ENCODE measurements at regions of chr6 and their contacts with region 1.

Region 1: DNA sequence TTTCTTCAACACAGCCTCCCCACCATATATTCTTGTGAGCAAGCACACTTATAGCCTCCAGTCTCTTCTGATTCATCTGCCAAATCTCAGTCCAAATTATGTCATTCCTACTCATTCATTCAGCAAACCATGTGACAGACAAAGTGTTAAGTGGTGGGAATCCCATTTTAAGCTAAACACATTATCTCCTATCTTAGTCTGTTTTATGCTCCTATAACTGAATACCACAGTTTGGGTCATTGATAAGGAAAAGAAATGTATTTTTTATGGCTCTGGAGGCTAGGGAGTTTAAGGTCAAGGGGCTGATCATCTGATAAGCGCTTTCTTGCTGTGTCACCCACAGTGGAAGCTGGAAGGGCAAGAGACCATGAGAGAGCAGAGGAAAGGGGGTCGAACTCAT is 23.9 kb upstream of the SMIM13 start:
- DNase-seq: no peak
- ATAC-seq: no peak
- H3K4me3 ChIP-seq: no peak overlapping the region
- H3K27ac ChIP-seq: no peak overlapping the region
- H3K4me1 ChIP-seq: peaks cover 0 to 28% (median 11%) of the 10 kb centered on the region in 4 donors
- H3K27me3 ChIP-seq: no peaks in the 10 kb centered on the region
- CTCF ChIP-seq: no peak
- POLR2A ChIP-seq: no peak

Region 2: GRCh38 chr6:10908228-10908627 is 161.5 kb before region 1 on chr6:
- intact Hi-C with region 1: no loop called
- DNase-seq: no peak
- ATAC-seq: no peak
- H3K4me3 ChIP-seq: no peak overlapping the region
- H3K27ac ChIP-seq: no peak overlapping the region
- H3K4me1 ChIP-seq: no peaks in the 10 kb centered on the region
- H3K27me3 ChIP-seq: no peaks in the 10 kb centered on the region
- CTCF ChIP-seq: no peak
- POLR2A ChIP-seq: no peak

Region 3: DNA sequence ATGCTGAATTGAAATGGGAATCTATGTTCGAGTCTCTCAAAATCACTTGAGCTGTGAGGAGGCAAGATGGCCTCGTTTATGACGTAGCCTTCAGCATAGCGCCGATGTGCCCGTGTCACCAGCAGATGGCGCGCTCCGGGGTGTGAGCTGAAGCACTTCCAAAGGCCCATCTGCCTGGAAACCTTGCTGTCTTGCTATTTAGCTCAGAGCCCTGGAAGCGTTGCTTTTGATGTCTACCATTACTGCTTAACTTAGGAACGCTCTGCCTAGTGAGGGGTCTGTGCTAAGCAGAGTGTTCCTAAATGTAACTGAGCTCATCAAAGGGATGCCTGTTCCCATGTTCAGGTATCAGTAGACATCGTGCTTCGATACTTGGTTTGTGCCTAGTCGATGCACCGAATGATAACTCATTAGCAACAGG is 115.2 kb before region 1 on chr6:
- intact Hi-C with region 1: loop called in 1 of 2 experiments (anchors 5 kb)
- DNase-seq: peak; percentile 78 to 81 (median 79)
- ATAC-seq: peak; percentile 92 to 98 (median 96)
- H3K4me3 ChIP-seq: no peak overlapping the region
- H3K27ac ChIP-seq: no peak overlapping the region
- H3K4me1 ChIP-seq: no peaks in the 10 kb centered on the region
- H3K27me3 ChIP-seq: no peaks in the 10 kb centered on the region
- CTCF ChIP-seq: peak; percentile 68 to 92 (median 76)
- POLR2A ChIP-seq: no peak

Measured in right lobe of liver (tissue), 6 donors.